Posterior vena cava (tissue), 2 donors: ENCODE measurements at regions of chr20 and their contacts with region 1.

Region 1: GRCh38 chr20:24917797-24918578 is 31.1 kb upstream of the CST7 start:
- DNase-seq: peak; percentile 94

Region 2: DNA sequence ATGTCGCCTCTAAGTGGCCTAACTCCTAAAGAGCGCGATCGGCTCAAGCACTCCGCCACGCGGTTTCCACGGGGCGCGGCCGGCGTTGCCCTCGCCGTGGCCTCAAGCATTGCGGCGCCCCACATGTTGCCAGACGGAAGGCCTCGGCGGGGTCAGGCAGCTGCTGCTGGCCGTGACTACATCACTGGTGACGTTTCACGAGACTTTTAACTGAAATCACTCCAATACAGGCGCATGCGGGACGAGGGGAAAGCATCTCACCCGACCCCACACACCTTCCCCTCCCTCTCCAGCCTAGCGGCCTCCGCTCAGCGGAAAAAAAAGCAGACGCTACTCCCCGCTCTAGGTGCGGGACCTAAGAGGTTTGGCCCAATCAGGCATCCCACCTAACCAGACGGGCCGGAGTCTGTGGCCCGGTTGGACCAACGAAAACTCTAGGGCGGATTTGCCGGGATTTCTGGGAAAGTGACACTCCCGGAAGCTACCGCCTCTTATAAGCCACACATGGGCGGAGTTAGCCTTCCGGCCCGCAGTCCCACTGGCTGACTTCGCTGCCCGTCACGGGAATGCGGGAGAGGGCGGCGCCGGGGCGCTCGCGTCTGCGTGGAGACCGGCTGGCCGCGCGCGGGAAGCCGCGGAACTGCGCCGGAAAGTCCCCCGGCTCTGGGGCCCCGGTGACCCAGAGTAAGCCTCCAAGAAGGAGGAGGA is 1567.6 kb before region 1 on chr20 and contains the start of gene NXT1:
- intact Hi-C with region 1: loop called in 1 of 2 experiments (anchors 5 kb)
- DNase-seq: peak; percentile 99
- total RNA-seq, gene NXT1: 14.6 to 19.1 TPM

Region 3: DNA sequence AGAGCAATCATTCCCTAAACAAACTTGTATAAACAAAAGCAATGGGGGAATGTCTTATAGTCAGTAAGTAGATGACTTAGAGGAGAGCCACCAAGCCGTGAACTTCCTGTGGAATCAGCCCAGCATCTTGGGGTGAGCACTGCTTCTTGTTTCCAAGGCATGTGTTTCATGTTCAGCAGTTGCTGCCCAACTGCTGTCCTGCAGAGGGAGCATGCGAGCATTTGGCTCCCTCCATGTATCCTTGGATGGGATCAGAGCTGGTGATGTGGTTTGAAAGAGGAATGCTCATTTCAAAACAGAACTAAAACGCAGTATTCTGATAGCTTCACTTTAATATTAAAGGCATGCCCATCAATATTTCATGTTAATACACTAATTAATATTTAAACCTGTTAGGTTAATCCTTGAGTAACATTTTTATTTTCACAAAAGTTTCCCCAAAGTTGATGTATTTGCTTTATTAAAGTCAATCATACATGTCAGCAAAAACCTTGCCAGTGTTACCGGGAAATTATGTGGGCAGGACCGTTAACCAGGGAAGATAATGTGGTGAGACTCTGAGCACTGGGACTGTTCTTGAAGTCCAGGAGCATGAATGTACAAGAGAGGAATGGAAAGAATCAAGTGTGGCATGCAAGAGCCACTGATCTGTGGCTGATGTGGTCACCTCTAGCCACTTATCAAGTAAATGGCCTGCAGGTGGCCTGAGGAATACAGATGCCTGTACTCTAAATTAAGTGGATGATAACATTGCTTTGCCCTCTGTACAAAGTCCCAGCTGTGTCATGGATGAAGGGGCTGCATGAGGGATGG is 757.2 kb before region 1 on chr20:
- intact Hi-C with region 1: loop called in 1 of 2 experiments (anchors 10 kb)
- DNase-seq: peak; percentile 85

Region 4: GRCh38 chr20:24501764-24502556 is 416.0 kb before region 1 on chr20:
- intact Hi-C with region 1: loop called in 1 of 2 experiments (anchors 10 kb)
- DNase-seq: peak; percentile 96

Region 5: DNA sequence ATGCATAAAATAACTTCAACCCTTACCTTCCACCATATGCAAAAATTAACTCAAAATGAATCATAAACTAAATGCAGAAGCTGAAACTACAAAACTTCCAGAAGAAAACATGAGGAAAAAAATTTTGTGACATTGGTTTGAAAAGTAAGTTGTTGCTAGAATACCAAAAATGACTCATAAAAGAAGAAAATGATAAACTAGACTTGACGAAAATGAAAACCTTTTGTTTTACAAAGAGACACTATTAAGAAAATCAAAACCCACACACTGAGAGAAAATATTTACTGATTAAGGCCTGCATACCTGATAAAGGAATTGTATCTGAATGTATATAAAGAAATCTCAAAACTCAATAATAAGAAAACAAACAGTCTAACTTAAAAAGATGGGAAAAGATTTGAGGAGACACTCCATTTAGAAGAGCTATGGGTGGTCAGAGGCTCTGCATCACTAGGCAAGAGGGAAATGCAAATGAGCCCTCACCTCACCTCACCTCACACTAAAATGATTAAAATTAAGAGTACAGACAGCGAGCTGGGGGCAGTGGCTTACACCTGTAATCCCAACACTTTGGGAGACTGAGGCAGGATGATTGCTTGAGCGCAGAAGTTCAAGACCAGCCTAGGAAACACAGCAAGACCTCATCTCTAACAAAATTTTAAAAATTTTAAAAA is 66.5 kb before region 1 on chr20:
- intact Hi-C with region 1: no loop called
- DNase-seq: no peak

Region 6: GRCh38 chr20:24936526-24937407 is 18.8 kb after region 1 on chr20:
- intact Hi-C with region 1: loop called in 1 of 2 experiments (anchors 1 kb)
- DNase-seq: peak; percentile 40